Activated CD4-positive, alpha-beta T cell treated with anti-CD3 and anti-CD28 coated beads for 36 hours (primary cell): ENCODE measurements at regions of chr2 and their contacts with region 1.

Region 1: DNA sequence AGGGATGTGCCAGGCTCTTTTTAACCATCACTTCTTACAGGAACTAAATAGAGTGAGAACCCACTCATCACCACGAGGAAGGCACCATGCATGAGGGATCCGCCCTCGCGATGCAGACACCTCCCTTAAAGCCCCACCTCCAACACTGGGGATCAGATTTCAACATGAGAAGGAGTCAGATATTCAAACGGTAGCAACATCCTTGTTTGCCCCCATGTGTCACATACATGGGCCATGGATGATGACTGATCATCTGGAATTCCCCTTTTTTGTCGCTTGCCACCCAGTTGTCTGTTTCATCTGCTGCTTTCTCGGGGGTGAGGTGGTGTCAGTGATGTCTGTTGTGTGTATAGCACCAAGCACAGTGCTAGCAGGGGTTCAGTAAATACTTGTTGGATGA is 57.9 kb downstream of the NCK2 start:
- DNase-seq: peak; percentile 83
- ATAC-seq: peak; percentile 78
- H3K4me3 Mint-ChIP-seq: peak overlapping the region; percentile 31
- H3K27ac Mint-ChIP-seq: peak overlapping the region; percentile 97
- H3K4me1 Mint-ChIP-seq: peaks cover 96% of the 10 kb centered on the region
- H3K27me3 Mint-ChIP-seq: no peaks in the 10 kb centered on the region

Region 2: GRCh38 chr2:104375206-104375605 is 1427.4 kb before region 1 on chr2:
- CTCF ChIA-PET with region 1: no interaction called
- POLR2A ChIA-PET with region 1: no interaction called
- intact Hi-C with region 1: no loop called
- DNase-seq: no peak
- ATAC-seq: no peak
- H3K4me3 Mint-ChIP-seq: no peak overlapping the region
- H3K27ac Mint-ChIP-seq: no peak overlapping the region
- H3K4me1 Mint-ChIP-seq: peaks cover 11% of the 10 kb centered on the region
- H3K27me3 Mint-ChIP-seq: peaks cover 2% of the 10 kb centered on the region

Region 3: DNA sequence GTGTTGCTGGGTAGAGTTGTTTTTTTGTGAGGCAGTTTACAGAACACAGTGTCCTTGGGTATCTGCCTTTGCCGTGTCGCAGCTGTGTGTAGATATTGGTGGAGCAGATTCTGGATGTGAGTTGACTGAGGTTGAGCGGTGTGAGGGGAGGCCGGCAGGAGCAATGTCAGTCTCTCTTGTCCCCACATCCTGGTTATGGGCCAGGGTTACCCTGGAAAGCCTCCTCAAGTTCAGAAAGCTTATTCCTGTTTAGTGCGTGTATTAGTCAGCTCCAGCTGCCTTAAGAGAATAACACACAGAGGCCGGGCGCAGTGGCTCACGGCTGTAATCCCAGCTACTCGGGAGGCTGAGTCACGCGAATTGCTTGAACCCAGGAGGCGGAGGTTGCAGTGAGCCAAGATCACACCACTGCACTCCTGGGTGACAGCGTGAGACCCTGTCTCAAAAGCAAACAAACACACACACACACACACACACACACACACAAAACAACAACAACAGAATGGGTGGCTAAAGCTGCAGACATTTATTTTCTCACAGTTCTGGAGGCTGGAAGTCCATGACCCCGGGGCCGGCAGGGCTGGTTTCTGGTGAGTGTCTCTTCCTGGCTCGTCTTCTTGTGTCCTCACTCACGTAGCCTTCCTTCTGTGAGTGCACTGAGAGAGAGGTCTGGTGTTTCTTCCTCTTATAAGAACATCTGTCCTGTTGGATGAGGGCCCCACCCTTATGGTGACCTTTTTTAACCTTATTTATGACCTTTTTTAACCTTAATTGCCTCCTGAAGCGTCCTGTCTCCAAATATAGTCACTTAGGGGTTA is 52.8 kb before region 1 on chr2:
- CTCF ChIA-PET with region 1: interaction called, 15 read pairs
- POLR2A ChIA-PET with region 1: interaction called, 33 read pairs
- intact Hi-C with region 1: loop called (anchors 1 to 2 kb)
- DNase-seq: peak; percentile 78
- ATAC-seq: peak; percentile 23
- H3K4me3 Mint-ChIP-seq: peak overlapping the region; percentile 97
- H3K27ac Mint-ChIP-seq: peak overlapping the region; percentile 99
- H3K4me1 Mint-ChIP-seq: peaks cover 71% of the 10 kb centered on the region
- H3K27me3 Mint-ChIP-seq: no peaks in the 10 kb centered on the region

Region 4: GRCh38 chr2:105789745-105790460 is 12.7 kb before region 1 on chr2:
- CTCF ChIA-PET with region 1: interaction called, 15 read pairs
- POLR2A ChIA-PET with region 1: interaction called, 6 read pairs
- intact Hi-C with region 1: loop called in 1 of 2 experiments (anchors 1 kb)
- DNase-seq: peak; percentile 83
- ATAC-seq: peak; percentile 90
- H3K4me3 Mint-ChIP-seq: peak overlapping the region; percentile 61
- H3K27ac Mint-ChIP-seq: peak overlapping the region; percentile 96
- H3K4me1 Mint-ChIP-seq: peaks cover 94% of the 10 kb centered on the region
- H3K27me3 Mint-ChIP-seq: no peaks in the 10 kb centered on the region

Region 5: DNA sequence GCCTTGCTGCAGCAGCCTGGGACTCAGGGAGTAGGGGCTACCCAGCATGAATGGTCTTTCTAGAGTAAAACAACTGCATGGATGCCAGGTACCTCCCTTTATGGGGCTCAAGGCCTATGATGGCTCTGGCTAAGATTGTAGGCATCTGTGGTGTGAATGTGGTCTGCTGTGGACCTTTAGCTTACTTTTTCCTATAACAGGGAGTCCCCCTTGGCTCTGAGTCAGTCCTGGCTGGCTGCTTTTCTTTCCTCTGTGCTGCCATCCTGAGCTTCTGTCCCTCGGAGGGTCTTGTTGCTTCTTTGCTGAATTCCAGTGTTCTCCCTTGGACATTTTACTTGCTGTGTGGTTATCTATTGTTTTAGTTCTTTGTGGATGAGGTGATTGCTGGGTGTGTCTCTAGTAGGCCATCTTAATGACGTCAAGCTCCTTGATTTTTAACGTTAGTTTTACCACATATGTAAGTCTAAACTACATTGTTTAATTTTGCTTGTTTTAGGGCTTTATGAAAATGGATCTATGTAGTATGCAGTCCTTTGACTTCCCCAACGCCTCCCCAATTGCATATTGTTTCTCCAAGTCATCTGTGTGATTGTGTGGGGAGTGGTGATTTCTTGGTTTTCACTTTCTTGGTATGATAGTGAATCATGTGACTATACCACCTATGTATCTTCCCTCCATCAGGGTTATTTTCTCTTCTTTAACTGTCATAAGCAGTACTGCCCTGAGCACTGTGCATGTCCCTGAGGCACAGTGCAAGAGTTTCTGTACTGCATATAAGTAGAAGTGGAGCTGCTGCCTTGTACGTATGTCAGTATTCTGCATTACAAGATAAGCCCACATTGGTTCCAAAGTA is 34.5 kb after region 1 on chr2:
- CTCF ChIA-PET with region 1: no interaction called
- POLR2A ChIA-PET with region 1: interaction called, 4 read pairs
- intact Hi-C with region 1: loop called (anchors 1 to 2 kb)
- DNase-seq: peak; percentile 74
- ATAC-seq: peak; percentile 85
- H3K4me3 Mint-ChIP-seq: peak overlapping the region; percentile 50
- H3K27ac Mint-ChIP-seq: peak overlapping the region; percentile 82
- H3K4me1 Mint-ChIP-seq: peaks cover 88% of the 10 kb centered on the region
- H3K27me3 Mint-ChIP-seq: no peaks in the 10 kb centered on the region

Region 6: DNA sequence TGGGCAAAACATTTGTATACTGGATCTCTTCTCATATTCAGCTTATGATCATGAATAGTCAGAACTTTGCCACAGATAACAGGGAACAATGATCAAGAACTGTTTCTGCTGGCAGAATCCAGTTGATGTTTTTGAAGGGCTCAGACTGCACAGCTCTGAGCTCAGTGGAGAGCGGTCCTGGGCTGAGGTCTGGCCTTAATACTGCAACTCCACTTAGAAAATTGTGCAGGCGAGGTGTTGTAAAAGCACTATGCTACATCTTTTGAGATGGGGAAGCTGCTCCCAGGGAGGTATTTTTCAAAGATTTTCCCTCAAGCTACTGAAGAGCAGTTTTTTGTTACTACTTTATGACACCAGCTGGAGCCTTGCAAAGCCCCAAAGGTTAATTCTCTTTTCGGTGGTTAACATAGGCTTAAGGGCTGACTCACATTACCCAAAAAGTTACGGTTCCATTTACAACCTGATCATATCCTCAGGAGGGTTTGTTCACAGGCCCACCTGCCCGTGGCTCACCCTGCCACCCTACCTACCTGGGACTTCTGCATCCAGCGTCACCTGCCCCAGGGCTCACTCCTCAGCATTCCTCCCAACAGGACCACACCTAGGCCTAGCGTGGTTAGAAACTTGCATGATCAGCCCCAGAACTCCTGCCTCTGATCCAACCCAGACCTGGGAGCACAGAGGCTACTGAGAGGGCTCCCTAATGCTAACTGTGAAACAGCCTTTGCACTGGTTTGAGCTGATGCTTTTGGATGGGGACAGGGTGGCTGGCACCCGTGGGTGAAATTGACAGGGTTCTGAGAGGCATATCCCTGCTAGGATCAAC is 56.5 kb after region 1 on chr2:
- CTCF ChIA-PET with region 1: interaction called, 11 read pairs
- POLR2A ChIA-PET with region 1: interaction called, 4 read pairs
- intact Hi-C with region 1: loop called (anchors 1 kb)
- DNase-seq: peak; percentile 51
- ATAC-seq: peak; percentile 65
- H3K4me3 Mint-ChIP-seq: peak overlapping the region; percentile 40
- H3K27ac Mint-ChIP-seq: peak overlapping the region; percentile 92
- H3K4me1 Mint-ChIP-seq: peaks cover 93% of the 10 kb centered on the region
- H3K27me3 Mint-ChIP-seq: no peaks in the 10 kb centered on the region

Region 7: DNA sequence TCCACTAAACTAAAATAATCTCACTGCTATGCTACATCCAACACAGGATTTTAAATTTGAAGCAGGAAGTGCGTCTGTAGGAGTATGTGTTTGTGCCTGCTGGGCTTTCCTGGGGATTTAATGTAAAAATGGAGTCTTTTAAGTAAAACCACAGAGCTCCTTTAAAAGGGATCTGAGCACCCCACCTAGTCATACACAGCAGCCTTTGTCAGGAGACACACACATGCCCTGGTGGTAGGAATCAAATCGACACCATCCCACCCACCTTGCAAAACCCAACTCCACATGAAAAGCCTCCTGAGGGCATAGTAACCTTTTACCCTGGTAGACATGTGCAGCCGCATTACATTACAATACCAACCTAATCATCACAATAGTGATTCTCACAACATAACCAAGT is 362.4 kb after region 1 on chr2:
- CTCF ChIA-PET with region 1: no interaction called
- POLR2A ChIA-PET with region 1: no interaction called
- intact Hi-C with region 1: no loop called
- DNase-seq: peak; percentile 36
- ATAC-seq: no peak
- H3K4me3 Mint-ChIP-seq: no peak overlapping the region
- H3K27ac Mint-ChIP-seq: peak overlapping the region; percentile 61
- H3K4me1 Mint-ChIP-seq: peaks cover 86% of the 10 kb centered on the region
- H3K27me3 Mint-ChIP-seq: no peaks in the 10 kb centered on the region